Naive thymus-derived CD4-positive, alpha-beta T cell (primary cell): ENCODE measurements at regions of chr19 and their contacts with region 1.

Region 1: DNA sequence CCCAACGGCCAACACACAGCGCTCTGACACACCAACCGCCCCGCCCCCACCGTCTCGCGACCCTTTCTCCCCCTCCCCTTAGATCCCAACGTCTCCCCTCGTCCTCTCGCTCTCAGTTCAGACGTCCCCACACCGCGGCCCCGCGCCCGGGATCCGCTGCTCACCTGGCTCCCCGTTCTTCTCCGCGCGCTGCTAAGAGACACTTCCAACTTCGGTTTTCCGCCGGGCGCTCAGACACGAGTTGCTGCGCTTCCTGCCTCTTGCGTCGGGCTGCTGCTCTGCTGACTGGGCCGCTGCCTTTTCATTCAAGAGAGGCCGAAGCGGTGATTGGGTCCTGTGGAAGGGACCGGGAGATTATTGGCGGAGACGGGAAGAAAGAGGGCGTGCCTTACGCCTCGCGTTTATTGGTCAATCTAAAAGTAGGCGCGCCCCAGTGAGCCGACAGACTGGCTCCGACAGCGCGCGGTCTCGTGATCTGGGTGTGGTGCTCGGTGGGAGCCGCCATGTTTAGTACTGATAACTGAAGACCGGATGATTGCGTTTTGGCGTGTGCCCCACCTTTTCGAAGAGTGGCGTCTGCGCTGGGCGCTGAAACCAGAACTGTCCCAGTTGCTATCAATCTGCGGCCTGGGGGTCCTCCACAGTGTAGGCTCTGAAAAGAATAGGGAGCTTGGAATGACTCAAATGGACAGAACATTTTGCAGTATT is at the start of gene DDX39A:
- DNase-seq: peak; percentile 80 to 99 (median 98)
- ATAC-seq: peak; percentile 90
- H3K4me3 ChIP-seq: peak within 1 kb of the TSS; percentile 87
- H3K4me3 Mint-ChIP-seq: peak within 1 kb of the TSS; percentile 83 to 97 (median 92)
- H3K27ac ChIP-seq: peak within 1 kb of the TSS; percentile 92
- H3K27ac Mint-ChIP-seq: peak within 1 kb of the TSS; percentile 90 to 97 (median 95)
- H3K4me1 ChIP-seq: peaks cover 24 to 29% of the 10 kb centered on the region in 2 donors
- H3K4me1 Mint-ChIP-seq: peaks cover 23 to 49% (median 38%) of the 10 kb centered on the region in 7 donors
- H3K27me3 ChIP-seq: no peaks in the 10 kb centered on the region
- H3K27me3 Mint-ChIP-seq: peaks cover 0 to 2% (median 0%) of the 10 kb centered on the region in 5 donors
- total RNA-seq, gene DDX39A: 135 to 288 (median 215) TPM

Region 2: GRCh38 chr19:14081325-14082093 is 337.8 kb before region 1 on chr19:
- CTCF ChIA-PET with region 1: no interaction called
- POLR2A ChIA-PET with region 1: interaction called, 3 read pairs
- intact Hi-C with region 1: loop called in 1 of 2 experiments (anchors 2 kb)
- DNase-seq: peak; percentile 96 to 100 (median 99)
- ATAC-seq: peak; percentile 97
- H3K4me3 ChIP-seq: peak overlapping the region; percentile 86
- H3K4me3 Mint-ChIP-seq: peak overlapping the region; percentile 80 to 98 (median 94)
- H3K27ac ChIP-seq: peak overlapping the region; percentile 80
- H3K27ac Mint-ChIP-seq: peak overlapping the region; percentile 86 to 98 (median 95)
- H3K4me1 ChIP-seq: peaks cover 5 to 15% of the 10 kb centered on the region in 2 donors
- H3K4me1 Mint-ChIP-seq: peaks cover 0 to 27% (median 17%) of the 10 kb centered on the region in 7 donors
- H3K27me3 ChIP-seq: no peaks in the 10 kb centered on the region
- H3K27me3 Mint-ChIP-seq: no peaks in the 10 kb centered on the region

Region 3: GRCh38 chr19:14218620-14219330 is 200.5 kb before region 1 on chr19:
- CTCF ChIA-PET with region 1: no interaction called
- POLR2A ChIA-PET with region 1: no interaction called
- intact Hi-C with region 1: no loop called
- DNase-seq: no peak
- ATAC-seq: no peak
- H3K4me3 ChIP-seq: no peak overlapping the region
- H3K4me3 Mint-ChIP-seq: no peak overlapping the region
- H3K27ac ChIP-seq: no peak overlapping the region
- H3K27ac Mint-ChIP-seq: peak overlapping the region in 1 of 9 donors; percentile 29
- H3K4me1 ChIP-seq: no peaks in the 10 kb centered on the region
- H3K4me1 Mint-ChIP-seq: peaks cover 10 to 18% (median 14%) of the 10 kb centered on the region in 7 donors
- H3K27me3 ChIP-seq: no peaks in the 10 kb centered on the region
- H3K27me3 Mint-ChIP-seq: peaks cover 0 to 6% (median 0%) of the 10 kb centered on the region in 5 donors

Region 4: GRCh38 chr19:14383661-14384555 is 35.4 kb before region 1 on chr19:
- CTCF ChIA-PET with region 1: interaction called, 3 read pairs
- POLR2A ChIA-PET with region 1: interaction called, 27 read pairs
- intact Hi-C with region 1: loop called (anchors 1 kb)
- DNase-seq: peak in 2 of 9 donors; percentile 69 to 81
- ATAC-seq: peak; percentile 4
- H3K4me3 ChIP-seq: peak overlapping the region; percentile 95
- H3K4me3 Mint-ChIP-seq: peak overlapping the region; percentile 89 to 100 (median 94)
- H3K27ac ChIP-seq: peak overlapping the region; percentile 98
- H3K27ac Mint-ChIP-seq: peak overlapping the region; percentile 96 to 99 (median 97)
- H3K4me1 ChIP-seq: peaks cover 24 to 28% of the 10 kb centered on the region in 2 donors
- H3K4me1 Mint-ChIP-seq: peaks cover 36 to 51% (median 47%) of the 10 kb centered on the region in 7 donors
- H3K27me3 ChIP-seq: no peaks in the 10 kb centered on the region
- H3K27me3 Mint-ChIP-seq: peaks cover 0 to 3% (median 0%) of the 10 kb centered on the region in 5 donors

Region 5: DNA sequence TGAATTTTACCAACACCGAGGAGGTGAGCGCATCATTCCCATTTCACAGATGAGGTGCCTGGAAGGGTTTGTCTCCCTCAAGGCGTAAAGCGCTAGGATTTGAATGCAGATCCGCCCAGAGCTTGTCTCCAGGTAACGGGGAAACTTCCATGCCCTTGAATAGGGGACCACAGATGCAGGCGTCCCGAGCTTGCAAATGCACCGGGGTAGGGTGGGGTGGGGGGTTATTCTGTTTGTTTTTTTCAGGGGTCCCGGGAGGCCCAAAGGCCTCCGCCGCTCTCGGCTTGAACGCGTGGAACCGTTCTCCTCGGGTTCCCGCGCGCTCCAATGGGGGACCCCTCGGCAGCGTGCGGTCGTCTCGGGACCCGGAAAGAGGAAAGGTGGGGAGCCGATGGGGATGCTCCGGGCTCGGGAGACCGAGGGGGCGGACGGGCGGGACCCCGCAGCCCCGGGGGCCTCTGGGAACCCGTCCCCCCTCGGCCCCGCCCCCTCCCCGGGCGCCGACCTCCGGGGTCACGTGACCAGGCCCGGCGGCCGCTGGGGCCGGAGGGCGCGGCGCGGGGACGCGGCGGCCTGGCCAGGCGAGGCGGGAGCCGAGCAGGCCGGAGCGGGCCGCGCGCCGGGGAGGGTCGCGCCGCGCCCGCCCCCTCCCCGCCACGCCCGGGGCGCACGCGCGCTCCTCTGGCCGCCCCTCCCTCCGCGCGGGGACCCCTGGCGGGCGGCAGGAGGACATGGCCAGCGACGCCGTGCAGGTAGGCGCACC is 13.7 kb after region 1 on chr19 and contains the start of gene PKN1:
- CTCF ChIA-PET with region 1: interaction called, 5 read pairs
- POLR2A ChIA-PET with region 1: interaction called, 37 read pairs
- intact Hi-C with region 1: loop called (anchors 1 kb)
- DNase-seq: peak in 3 of 9 donors; percentile 10 to 79 (median 47)
- ATAC-seq: peak; percentile 23
- H3K4me3 ChIP-seq: peak within 1 kb of the TSS; percentile 67
- H3K4me3 Mint-ChIP-seq: peak within 1 kb of the TSS; percentile 74 to 92 (median 88)
- H3K27ac ChIP-seq: peak within 1 kb of the TSS; percentile 88
- H3K27ac Mint-ChIP-seq: peak within 1 kb of the TSS; percentile 79 to 97 (median 90)
- H3K4me1 ChIP-seq: peaks cover 18 to 24% of the 10 kb centered on the region in 2 donors
- H3K4me1 Mint-ChIP-seq: peaks cover 13 to 48% (median 34%) of the 10 kb centered on the region in 7 donors
- H3K27me3 ChIP-seq: no peaks in the 10 kb centered on the region
- H3K27me3 Mint-ChIP-seq: peaks cover 0 to 14% (median 0%) of the 10 kb centered on the region in 5 donors
- total RNA-seq, gene PKN1: 194 to 211 (median 206) TPM

Region 6: DNA sequence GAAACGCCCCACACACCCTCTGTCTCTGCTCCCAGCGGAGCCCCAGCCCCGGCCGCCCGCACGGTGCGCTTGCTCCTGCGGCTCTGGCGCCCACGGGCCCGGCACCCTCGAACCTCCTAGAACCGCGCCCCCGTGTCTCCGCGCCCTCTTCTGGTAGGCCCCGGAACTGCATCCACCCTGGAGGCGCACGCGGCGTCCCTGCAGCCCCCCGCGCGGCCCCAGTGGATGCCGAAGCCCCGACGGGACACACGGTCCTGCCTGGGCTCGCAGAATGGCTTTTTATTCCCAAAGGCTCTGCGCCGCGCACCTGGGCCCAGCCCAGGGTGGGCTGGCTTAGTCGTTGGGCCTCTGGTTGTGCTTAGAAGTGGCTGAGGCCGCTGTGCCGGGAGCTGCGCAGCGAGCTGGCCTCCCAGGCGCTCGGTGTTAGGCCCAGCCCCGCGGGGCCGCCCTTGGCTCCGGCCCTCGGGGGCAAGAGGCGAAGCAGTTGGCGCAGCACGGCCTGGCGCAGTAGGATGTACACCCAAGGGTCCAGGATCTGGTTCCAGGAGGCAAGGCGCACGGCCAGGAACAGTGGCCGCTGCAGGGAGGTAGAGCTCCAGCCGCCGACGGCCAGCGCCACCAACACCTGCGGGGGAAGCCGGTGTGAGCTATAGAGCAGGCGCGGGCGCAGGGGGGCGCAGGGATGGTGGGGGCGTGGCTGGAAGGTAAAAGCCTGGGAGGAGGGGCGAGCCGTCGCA is 53.1 kb after region 1 on chr19:
- CTCF ChIA-PET with region 1: interaction called, 3 read pairs
- POLR2A ChIA-PET with region 1: interaction called, 3 read pairs
- intact Hi-C with region 1: loop called in 1 of 2 experiments (anchors 1 kb)
- DNase-seq: peak; percentile 65 to 94 (median 82)
- ATAC-seq: peak; percentile 85
- H3K4me3 ChIP-seq: peak overlapping the region; percentile 55
- H3K4me3 Mint-ChIP-seq: peak overlapping the region; percentile 25 to 84 (median 68)
- H3K27ac ChIP-seq: no peak overlapping the region
- H3K27ac Mint-ChIP-seq: peak overlapping the region in 1 of 9 donors; percentile 41
- H3K4me1 ChIP-seq: peaks cover 4 to 17% of the 10 kb centered on the region in 2 donors
- H3K4me1 Mint-ChIP-seq: peaks cover 0 to 39% (median 29%) of the 10 kb centered on the region in 7 donors
- H3K27me3 ChIP-seq: peaks cover 0 to 4% of the 10 kb centered on the region in 2 donors
- H3K27me3 Mint-ChIP-seq: peaks cover 6 to 19% (median 12%) of the 10 kb centered on the region in 5 donors

Region 7: GRCh38 chr19:14672188-14672872 is 253.1 kb after region 1 on chr19:
- CTCF ChIA-PET with region 1: no interaction called
- POLR2A ChIA-PET with region 1: no interaction called
- intact Hi-C with region 1: no loop called
- DNase-seq: no peak
- ATAC-seq: peak; percentile 88
- H3K4me3 ChIP-seq: no peak overlapping the region
- H3K4me3 Mint-ChIP-seq: no peak overlapping the region
- H3K27ac ChIP-seq: no peak overlapping the region
- H3K27ac Mint-ChIP-seq: no peak overlapping the region
- H3K4me1 ChIP-seq: peaks cover 0 to 19% of the 10 kb centered on the region in 2 donors
- H3K4me1 Mint-ChIP-seq: peaks cover 0 to 8% (median 0%) of the 10 kb centered on the region in 7 donors
- H3K27me3 ChIP-seq: peaks cover 0 to 4% of the 10 kb centered on the region in 2 donors
- H3K27me3 Mint-ChIP-seq: peaks cover 4 to 53% (median 21%) of the 10 kb centered on the region in 5 donors